ENCODE measurements at regions of chr17 and their contacts with region 1.

Region 1: GRCh38 chr17:14300575-14301278 is at the start of gene HS3ST3B1:
- DNase-seq: peak; percentile 100
- H3K4me3 ChIP-seq: peak within 1 kb of the TSS; percentile 90
- H3K27ac ChIP-seq: peak within 1 kb of the TSS; percentile 38
- H3K27me3 ChIP-seq: peaks cover 6% of the 10 kb centered on the region
- CTCF ChIP-seq: peak; percentile 18

Region 2: GRCh38 chr17:13594762-13595598 is 705.7 kb before region 1 on chr17:
- in situ Hi-C with region 1: loop called (anchors 25 kb)
- DNase-seq: peak; percentile 82
- H3K4me3 ChIP-seq: no peak overlapping the region
- H3K27ac ChIP-seq: no peak overlapping the region
- H3K27me3 ChIP-seq: no peaks in the 10 kb centered on the region
- CTCF ChIP-seq: peak; percentile 89